ENCODE measurements at regions of chr12 and their contacts with region 1.

Region 1: GRCh38 chr12:110280779-110281548 is at the start of gene ATP2A2:
- DNase-seq: peak; percentile 94
- total RNA-seq, gene ATP2A2: 918 TPM

Region 2: DNA sequence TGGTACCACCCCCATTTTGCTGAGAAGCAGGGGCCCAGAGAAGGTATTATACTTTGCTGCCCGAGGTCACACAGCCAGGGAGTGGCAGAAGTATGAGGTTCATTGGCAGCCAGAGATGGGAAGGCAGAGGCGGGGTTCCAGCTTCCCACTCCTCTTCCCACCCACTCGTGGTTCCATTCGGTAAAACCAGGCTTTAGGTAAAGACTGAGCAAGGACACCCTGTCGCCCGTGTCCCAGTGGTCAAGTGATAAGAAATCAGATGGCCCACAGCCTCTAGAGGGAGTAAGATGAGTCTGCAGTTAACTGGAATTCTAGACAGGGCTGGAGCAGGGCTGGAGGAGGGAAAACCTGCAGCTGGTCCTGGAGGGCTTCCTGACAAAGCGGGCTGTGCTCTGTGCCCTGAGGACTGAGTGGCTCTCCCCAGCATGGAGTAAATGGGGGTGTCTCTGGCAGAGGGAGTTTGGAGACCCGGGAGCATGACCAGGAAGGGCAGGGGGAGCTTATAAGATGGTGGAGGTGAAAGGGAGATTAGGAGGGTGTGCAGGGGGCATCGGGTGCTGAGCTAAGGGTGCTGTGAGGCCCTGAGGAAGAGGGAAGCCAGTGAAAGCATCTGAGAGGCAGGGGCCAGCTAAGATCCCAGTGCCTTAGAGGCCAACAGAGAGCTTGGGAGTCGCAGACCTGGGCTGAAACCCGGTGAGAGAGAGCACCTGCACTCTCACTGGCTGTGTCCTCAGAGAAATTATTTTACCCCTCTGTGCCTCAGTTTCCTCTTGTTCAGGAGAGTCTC is 561.5 kb before region 1 on chr12:
- intact Hi-C with region 1: no loop called
- DNase-seq: no peak

Region 3: GRCh38 chr12:110100315-110100970 is 180.5 kb before region 1 on chr12:
- intact Hi-C with region 1: loop called (anchors 5 kb)
- DNase-seq: no peak

Region 4: GRCh38 chr12:110224379-110225304 is 56.3 kb before region 1 on chr12:
- intact Hi-C with region 1: loop called (anchors 5 kb)
- DNase-seq: no peak

Region 5: GRCh38 chr12:110245369-110245772 is 35.6 kb before region 1 on chr12:
- intact Hi-C with region 1: loop called (anchors 5 kb)
- DNase-seq: no peak

Region 6: GRCh38 chr12:110301065-110301806 is 20.3 kb after region 1 on chr12:
- intact Hi-C with region 1: loop called (anchors 1 kb)
- DNase-seq: no peak

Region 7: DNA sequence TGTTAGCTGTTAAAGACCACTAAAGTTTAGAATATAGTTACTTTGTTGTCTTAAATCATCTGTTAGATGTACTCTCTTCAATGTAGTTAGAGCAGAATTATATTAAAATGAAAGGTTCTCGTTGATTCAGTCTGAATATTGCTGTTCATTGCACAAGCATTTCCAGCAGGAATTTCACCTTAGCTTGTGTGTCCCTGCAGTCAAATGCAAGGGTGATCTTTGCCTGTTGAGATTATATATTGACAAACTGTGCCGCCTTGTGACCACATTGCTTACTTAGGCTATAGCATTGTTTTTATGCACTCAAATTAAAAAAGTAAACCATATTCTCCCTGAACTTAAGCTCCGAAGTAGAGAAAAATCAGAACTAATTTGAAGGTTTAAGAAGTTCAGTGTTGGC is 39.6 kb after region 1 on chr12:
- intact Hi-C with region 1: loop called (anchors 5 kb)
- DNase-seq: no peak

Region 8: DNA sequence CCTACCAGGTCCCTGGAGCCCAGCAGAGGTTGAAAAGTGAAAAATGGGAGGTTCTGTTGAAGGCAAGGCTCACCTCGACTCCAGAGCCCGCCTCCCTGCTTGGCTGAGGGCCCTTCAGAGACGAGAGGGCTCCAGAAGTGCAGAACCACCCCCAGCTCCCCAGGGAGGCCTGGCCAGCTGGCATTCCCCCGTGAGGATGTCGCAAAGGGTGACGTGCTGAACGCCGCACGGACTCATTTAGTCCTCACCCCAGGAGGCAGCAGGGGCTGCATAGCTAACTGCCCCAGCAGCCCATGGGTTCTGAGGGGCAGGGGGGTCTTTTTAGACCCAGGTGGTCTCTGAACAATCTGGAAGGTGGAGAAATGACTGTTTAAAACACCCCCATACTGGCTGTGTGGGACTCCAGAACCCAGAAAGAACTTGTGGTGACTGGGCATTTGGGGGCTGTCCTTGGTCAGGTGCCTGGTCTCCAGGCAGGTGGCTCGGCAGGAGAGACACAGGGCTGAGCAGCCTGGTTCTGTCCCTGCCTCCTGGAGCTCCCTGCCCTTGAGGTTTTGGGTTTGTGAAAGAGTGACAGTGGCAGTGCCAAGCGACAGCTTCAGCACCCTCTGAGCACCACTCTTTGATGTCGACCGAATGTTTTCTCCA is 90.6 kb after region 1 on chr12:
- intact Hi-C with region 1: no loop called
- DNase-seq: no peak